Activated CD8-positive, alpha-beta T cell treated with anti-CD3 and anti-CD28 coated beads, Interleukin-2, amount 10 ng/mL, durations not matched to agents 7 days and 5 days (primary cell): ENCODE measurements at regions of chr12 and their contacts with region 1.

Region 1: GRCh38 chr12:92928962-92929915 is at the start of gene EEA1:
- DNase-seq: peak; percentile 97
- ATAC-seq: peak; percentile 91
- H3K4me3 Mint-ChIP-seq: peak within 1 kb of the TSS; percentile 84
- H3K27ac Mint-ChIP-seq: peak within 1 kb of the TSS; percentile 97
- H3K4me1 Mint-ChIP-seq: peaks cover 27% of the 10 kb centered on the region
- H3K27me3 Mint-ChIP-seq: peaks cover 2% of the 10 kb centered on the region
- total RNA-seq, gene EEA1: 15.9 to 16.2 TPM

Region 2: GRCh38 chr12:92827836-92828431 is 101.3 kb before region 1 on chr12:
- CTCF ChIA-PET with region 1: interaction called, 21 read pairs
- POLR2A ChIA-PET with region 1: interaction called, 3 read pairs
- DNase-seq: peak; percentile 57
- ATAC-seq: no peak
- H3K4me3 Mint-ChIP-seq: no peak overlapping the region
- H3K27ac Mint-ChIP-seq: no peak overlapping the region
- H3K4me1 Mint-ChIP-seq: no peaks in the 10 kb centered on the region
- H3K27me3 Mint-ChIP-seq: no peaks in the 10 kb centered on the region

Region 3: DNA sequence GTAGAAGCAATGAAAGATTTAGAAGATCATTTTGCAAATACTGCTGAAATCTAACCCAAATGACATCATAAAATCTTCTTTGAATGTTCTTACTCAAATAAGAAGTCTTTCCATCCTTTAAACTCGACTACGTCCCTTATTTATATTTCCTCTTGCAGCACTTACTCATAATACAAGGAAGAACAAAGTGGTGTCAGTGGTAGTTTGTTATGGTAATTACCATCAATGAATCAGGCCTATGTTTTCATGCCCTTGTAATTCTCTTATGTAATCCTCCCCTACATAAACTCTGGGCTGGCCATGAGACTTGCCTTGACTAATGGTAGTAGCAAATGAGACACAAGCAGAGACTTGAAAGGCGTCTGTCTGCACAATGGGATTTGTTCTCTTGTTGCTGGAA is 17.2 kb before region 1 on chr12:
- CTCF ChIA-PET with region 1: interaction called, 50 read pairs
- POLR2A ChIA-PET with region 1: interaction called, 9 read pairs
- DNase-seq: no peak
- ATAC-seq: peak; percentile 28
- H3K4me3 Mint-ChIP-seq: no peak overlapping the region
- H3K27ac Mint-ChIP-seq: peak overlapping the region; percentile 4
- H3K4me1 Mint-ChIP-seq: peaks cover 50% of the 10 kb centered on the region
- H3K27me3 Mint-ChIP-seq: no peaks in the 10 kb centered on the region